ENCODE measurements at regions of chr10 and their contacts with region 1.

Region 1: DNA sequence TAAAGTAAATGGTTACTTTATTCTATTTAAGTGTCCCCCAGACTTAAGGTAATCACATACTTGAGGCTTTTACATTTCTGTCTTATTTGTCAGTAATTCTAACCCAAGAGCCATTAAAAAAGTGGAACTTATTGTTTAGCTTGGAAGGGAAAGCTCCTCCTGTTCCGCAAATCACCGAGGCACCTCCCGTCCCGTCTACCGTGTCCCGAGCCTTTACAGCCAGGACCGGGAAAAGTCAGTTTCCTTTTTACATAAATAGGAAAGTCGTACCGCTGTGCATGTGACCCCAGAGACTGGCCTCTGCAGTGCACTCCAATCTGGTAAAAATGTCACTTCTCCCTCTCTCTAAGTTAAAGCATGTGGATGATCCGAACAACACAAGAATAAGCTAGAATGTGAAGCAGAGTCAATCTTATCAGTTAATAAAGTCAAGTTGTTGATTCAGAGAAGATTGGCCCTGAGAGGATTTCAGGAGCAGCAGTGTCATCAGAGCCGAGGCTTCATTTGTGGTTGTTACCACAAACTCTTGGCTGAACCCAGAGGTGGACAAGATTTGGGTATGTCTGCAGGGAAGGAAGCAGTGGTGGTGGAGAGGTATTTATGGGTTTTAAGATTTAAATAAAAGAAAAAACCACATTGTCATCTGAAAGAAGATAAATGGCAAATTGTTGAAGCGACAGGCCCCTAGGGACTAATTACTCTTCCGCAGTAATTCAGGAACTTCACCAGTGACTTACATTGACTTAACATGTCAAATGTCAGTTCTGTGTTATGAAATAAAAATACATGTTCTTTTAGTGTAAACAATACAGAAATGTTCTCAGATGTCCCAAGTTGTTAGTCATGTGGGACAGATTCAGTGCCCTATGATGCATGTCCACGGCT is 316.6 kb upstream of the ZNF32 start:
- DNase-seq: peak in 1 of 2 donors; percentile 72
- H3K4me3 ChIP-seq: no peak overlapping the region
- H3K27ac ChIP-seq: peak overlapping the region; percentile 65 to 68
- H3K4me1 ChIP-seq: peaks cover 6 to 44% of the 10 kb centered on the region in 2 donors
- H3K27me3 ChIP-seq: no peaks in the 10 kb centered on the region
- CTCF ChIP-seq: no peak

Region 2: GRCh38 chr10:44016589-44017482 is 51.6 kb after region 1 on chr10:
- intact Hi-C with region 1: loop called (anchors 5 kb)
- DNase-seq: peak in 1 of 2 donors; percentile 79
- H3K4me3 ChIP-seq: no peak overlapping the region
- H3K27ac ChIP-seq: peak overlapping the region; percentile 70 to 71
- H3K4me1 ChIP-seq: peaks cover 7 to 19% of the 10 kb centered on the region in 2 donors
- H3K27me3 ChIP-seq: no peaks in the 10 kb centered on the region
- CTCF ChIP-seq: no peak

Region 3: GRCh38 chr10:44071479-44071878 is 106.2 kb after region 1 on chr10:
- intact Hi-C with region 1: loop called (anchors 5 kb)
- DNase-seq: no peak
- H3K4me3 ChIP-seq: no peak overlapping the region
- H3K27ac ChIP-seq: peak overlapping the region in 1 of 2 donors; percentile 48
- H3K4me1 ChIP-seq: peaks cover 7 to 11% of the 10 kb centered on the region in 2 donors
- H3K27me3 ChIP-seq: no peaks in the 10 kb centered on the region
- CTCF ChIP-seq: no peak

Measured in ascending aorta (tissue), 2 donors.